ENCODE measurements at regions of chr1 and their contacts with region 1.

Region 1: DNA sequence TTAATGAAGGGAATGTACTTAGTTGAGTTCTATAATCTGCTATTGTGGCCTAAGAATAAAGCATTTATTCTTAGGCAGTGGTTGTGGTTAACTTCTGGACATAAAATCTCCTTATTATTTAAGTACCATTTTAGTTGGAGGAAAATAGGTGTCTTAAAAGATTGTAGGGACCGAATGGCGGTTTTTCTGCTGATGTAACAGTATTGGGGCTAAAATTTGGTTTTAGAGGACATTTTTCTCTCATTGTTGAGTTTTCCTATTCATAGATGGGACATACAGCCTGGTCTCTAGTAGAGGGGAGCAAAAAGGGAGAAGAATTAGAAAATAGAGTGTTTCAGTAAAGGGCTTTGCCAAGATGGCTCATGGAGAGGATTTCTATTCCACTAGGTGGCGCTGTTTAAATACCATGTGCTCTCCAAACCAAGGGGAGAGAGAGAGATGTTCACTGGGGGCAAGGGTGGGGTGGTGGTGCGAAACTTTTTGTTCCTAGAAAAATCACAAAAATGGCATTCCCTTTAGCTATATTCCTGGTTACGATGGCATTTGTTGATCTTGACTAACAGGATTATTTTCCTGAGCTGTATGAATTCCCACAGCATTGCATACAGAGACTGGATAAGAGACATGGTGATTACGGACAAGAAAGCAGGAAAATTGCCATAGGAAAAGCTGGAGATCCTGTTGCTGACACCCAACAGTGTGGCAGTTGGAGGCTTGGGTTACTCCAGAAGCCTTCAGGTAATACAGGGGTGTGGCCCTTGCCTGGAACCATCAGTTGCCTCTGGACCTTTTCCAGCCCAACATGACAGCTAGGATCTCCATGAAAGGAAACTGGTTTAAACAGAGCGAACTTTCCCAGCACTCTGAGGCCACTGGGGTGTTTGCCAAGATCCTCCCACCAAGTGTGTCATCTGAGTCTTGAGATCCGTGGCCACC is 18.2 kb upstream of the FCGR2A start:
- DNase-seq: peak; percentile 53
- ATAC-seq: peak; percentile 77 to 89

Region 2: DNA sequence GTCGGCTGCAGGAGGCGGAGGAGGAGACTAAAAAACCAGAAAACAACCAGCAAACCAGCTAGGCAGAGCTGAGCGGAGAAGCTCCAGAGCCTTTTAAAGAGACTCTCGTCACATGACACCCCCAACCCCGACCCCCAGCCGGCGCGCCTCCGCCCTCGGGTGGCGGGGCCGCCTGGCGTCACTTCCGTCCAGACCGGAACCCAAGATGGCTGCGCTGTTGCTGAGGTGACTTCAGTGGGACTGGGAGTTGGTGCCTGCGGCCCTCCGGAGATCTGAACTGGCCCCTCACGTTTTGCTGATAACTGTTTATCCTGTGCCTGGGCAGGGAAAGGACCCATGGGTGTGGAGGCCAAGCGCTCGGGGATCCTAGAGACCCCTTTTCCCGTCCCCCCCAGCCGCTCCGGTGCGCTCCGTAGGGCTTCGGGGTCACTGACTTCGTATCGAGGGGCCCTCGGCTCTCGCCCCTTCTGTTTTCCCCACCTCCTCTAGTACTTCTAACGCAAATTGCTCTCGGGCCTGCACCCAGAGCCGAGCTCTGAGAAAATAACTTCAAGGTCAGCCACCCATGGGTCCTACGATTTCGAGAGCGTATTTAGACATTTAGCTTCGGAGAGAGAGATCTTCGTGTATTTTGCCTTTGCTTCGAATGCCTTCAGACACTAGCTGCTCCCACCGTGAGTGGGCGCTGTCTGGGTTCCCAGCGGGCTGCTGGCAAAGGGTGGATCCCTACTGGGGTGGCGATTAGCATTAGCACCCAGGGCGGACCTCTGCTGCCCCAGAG is 172.7 kb before region 1 on chr1 and contains the start of gene SDHC:
- intact Hi-C with region 1: no loop called
- DNase-seq: peak; percentile 93
- ATAC-seq: peak; percentile 99 to 100
- total RNA-seq, gene SDHC: 241 to 284 TPM

Region 3: GRCh38 chr1:161427733-161428516 is 59.1 kb before region 1 on chr1:
- intact Hi-C with region 1: no loop called
- DNase-seq: no peak
- ATAC-seq: peak in 1 of 2 donors; percentile 38

Region 4: DNA sequence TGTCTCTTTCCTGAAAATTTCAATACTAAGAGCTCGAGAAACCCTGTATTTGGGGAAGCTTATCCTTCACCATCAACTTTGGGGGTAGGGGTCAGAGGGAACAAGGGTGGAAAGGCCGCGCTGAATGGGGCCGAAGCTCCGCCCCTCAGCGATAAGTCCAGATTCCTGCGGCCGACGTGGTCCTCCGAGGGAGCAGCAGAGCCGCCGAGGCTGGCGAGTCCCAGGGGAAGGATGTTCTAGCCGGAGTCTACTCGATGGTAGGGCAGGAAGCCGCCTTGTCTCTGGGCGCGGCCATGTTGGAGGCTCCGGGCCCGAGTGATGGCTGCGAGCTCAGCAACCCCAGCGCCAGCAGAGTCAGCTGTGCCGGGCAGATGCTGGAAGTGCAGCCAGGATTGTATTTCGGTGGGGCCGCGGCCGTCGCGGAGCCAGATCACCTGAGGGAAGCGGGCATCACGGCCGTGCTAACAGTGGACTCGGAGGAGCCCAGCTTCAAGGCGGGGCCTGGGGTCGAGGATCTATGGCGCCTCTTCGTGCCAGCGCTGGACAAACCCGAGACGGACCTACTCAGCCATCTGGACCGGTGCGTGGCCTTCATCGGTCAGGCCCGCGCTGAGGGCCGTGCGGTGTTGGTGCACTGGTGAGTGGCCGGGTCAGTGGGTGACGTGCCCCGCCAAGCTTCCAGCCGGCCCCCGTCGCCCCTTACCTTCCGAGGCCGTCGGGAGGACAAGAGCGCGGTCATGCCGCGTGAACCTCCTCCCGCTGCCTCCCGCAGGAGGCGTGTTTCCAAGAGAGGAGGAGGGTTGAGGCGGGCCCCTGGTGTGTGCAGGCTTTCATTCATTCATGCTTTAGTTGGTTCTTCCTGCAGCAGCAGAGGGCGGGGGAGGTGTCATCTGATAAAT is 262.7 kb after region 1 on chr1 and contains the start of gene DUSP12:
- intact Hi-C with region 1: loop called in 1 of 2 experiments (anchors 10 kb)
- DNase-seq: peak; percentile 96
- ATAC-seq: peak; percentile 99
- total RNA-seq, gene DUSP12: 10.9 to 12.0 TPM

Region 5: DNA sequence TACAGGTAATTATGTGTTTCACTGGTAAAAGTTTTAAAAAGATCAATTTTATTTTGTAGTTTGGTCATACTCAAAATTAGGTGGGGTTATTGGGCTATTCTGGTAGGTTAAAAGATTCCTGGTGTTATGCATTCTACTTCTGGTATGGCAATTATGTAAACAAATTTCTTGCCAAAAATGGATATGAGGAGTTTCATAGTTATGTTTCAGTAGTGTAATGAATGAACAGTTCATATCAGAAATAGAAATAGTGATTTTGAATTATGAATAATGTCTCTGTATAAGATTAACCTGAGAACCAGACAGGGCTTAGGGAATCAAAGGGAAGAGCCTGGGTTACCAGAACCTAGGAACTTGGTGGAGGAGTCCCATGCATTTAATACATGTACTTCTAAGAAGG is 294.9 kb after region 1 on chr1:
- intact Hi-C with region 1: no loop called
- DNase-seq: no peak
- ATAC-seq: no peak

Region 6: DNA sequence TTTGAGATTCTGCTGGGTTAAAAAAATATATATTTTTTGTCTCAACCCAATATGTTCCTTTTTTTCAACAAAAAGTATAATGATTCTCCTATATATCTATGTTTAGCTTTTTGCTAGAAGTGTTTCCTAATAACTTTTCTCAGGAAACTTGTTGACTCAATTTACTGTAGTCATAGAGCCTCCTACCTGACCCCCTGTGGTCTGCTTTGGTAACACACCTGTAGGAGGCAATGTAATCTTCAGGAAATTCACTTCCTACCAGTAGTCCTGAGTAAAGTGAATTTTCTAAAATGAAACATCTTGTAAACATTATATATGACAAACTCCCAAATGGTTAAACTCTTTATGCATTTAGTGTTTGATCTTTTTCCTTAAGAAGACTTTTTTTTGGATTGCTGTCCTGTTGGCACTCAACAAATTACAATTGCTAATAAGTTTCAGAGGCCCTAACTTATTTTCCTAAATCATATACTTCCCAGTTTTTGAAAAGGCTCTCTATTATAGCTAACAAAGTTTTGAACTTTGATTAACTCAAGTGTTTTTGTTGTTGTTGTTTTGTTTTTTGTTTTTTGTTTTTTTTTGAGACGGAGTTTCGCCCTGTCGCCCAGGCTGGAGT is 418.3 kb after region 1 on chr1:
- intact Hi-C with region 1: no loop called
- DNase-seq: no peak
- ATAC-seq: no peak